H1 (cell line): ENCODE measurements at regions of chr17 and their contacts with region 1.

Region 1: GRCh38 chr17:16521070-16521727 is 29.2 kb upstream of the LRRC75A start:
- DNase-seq: peak; percentile 39 to 69
- H3K4me3 ChIP-seq: no peak overlapping the region
- H3K27ac ChIP-seq: no peak overlapping the region
- H3K4me1 ChIP-seq: peaks cover 0 to 3% (median 0%) of the 10 kb centered on the region in 4 experiments; a peak in 3 of 7 replicates
- H3K27me3 ChIP-seq: peaks cover 0 to 2% (median 0%) of the 10 kb centered on the region in 4 experiments; a peak in 2 of 7 replicates
- CTCF ChIP-seq: peak; percentile 78 to 97 (median 93)
- EP300 ChIP-seq: no peak
- POLR2A ChIP-seq: no peak
- RAD21 ChIP-seq: peak; percentile 97

Region 2: GRCh38 chr17:16456742-16457316 is 64.4 kb before region 1 on chr17:
- CTCF ChIA-PET with region 1: interaction called, 941 read pairs
- POLR2A ChIA-PET with region 1: interaction called, 11 read pairs
- DNase-seq: no peak
- H3K4me3 ChIP-seq: no peak overlapping the region
- H3K27ac ChIP-seq: no peak overlapping the region
- H3K4me1 ChIP-seq: peaks cover 6 to 16% (median 12%) of the 10 kb centered on the region in 4 experiments
- H3K27me3 ChIP-seq: no peaks in the 10 kb centered on the region
- CTCF ChIP-seq: peak; percentile 37 to 42 (median 37)
- EP300 ChIP-seq: no peak
- POLR2A ChIP-seq: no peak
- RAD21 ChIP-seq: peak; percentile 53 to 65

Region 3: GRCh38 chr17:16477255-16477654 is 43.9 kb before region 1 on chr17:
- CTCF ChIA-PET with region 1: interaction called, 941 read pairs
- POLR2A ChIA-PET with region 1: no interaction called
- DNase-seq: no peak
- H3K4me3 ChIP-seq: no peak overlapping the region
- H3K27ac ChIP-seq: no peak overlapping the region
- H3K4me1 ChIP-seq: peaks cover 0 to 33% (median 9%) of the 10 kb centered on the region in 4 experiments; a peak in 5 of 7 replicates
- H3K27me3 ChIP-seq: no peaks in the 10 kb centered on the region
- CTCF ChIP-seq: no peak
- EP300 ChIP-seq: no peak
- POLR2A ChIP-seq: no peak
- RAD21 ChIP-seq: no peak

Region 4: DNA sequence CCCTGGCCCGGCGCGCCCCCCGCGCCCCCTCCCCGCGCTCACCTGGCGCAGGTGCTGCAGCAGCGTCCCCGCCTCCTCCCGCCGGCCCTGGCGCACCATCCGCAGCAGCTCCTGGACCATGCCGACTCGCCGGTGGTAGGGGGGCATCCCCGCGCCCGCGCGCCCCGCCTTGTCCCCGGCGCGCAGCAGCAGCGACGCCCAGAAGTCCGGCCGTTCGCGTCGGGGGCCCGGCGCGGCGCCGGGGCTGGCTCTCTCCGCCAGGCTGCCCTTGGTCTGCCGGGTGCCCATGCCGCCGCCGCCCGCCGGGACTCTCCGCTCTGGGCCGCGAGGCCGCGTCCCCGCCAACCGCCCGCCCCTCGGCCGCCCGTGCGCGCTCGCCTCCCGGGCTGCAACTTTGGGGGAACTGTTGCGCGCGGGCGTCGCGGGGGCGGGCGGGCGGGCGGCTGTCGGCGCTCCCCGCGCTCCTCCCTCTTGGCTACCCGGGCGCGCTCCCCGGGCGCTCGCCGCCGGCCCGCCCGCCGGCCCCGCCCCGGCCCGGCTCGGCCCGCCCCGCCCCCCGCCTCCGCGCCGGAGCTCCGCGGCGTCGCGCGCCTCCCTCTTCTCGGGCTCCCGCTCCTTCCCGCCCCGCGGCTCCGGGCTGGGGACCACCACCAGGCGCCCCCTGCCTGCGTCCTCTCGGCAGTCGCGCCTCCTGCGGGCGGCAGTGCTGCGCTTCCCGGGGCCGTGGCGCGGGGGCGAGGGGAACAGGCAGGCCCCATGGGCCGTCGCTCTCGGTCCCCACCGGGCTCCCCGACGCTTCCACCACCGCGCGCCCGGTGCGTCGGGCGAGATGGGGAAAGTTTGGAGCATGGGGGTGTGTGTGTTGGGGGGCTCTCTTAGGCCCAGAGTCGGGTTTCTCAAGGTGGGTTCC is 29.2 kb before region 1 on chr17 and contains the start of gene LRRC75A:
- CTCF ChIA-PET with region 1: interaction called, 41 read pairs
- POLR2A ChIA-PET with region 1: interaction called, 4 read pairs
- DNase-seq: peak in 1 of 2 experiments; percentile 74
- H3K4me3 ChIP-seq: peak within 1 kb of the TSS; percentile 46 to 71 (median 58)
- H3K27ac ChIP-seq: no peak within 1 kb of the TSS
- H3K4me1 ChIP-seq: peaks cover 11 to 37% (median 27%) of the 10 kb centered on the region in 4 experiments
- H3K27me3 ChIP-seq: peaks cover 0 to 23% (median 13%) of the 10 kb centered on the region in 4 experiments; a peak in 2 of 7 replicates
- CTCF ChIP-seq: peak in 2 of 3 experiments; percentile 32 to 53; a peak in 3 of 4 replicates
- EP300 ChIP-seq: no peak
- POLR2A ChIP-seq: no peak
- RAD21 ChIP-seq: peak in 1 of 2 experiments; percentile 34; a peak in 2 of 4 replicates
- total RNA-seq, gene LRRC75A: 7.2 and 9.9 TPM in 2 replicates

Region 5: DNA sequence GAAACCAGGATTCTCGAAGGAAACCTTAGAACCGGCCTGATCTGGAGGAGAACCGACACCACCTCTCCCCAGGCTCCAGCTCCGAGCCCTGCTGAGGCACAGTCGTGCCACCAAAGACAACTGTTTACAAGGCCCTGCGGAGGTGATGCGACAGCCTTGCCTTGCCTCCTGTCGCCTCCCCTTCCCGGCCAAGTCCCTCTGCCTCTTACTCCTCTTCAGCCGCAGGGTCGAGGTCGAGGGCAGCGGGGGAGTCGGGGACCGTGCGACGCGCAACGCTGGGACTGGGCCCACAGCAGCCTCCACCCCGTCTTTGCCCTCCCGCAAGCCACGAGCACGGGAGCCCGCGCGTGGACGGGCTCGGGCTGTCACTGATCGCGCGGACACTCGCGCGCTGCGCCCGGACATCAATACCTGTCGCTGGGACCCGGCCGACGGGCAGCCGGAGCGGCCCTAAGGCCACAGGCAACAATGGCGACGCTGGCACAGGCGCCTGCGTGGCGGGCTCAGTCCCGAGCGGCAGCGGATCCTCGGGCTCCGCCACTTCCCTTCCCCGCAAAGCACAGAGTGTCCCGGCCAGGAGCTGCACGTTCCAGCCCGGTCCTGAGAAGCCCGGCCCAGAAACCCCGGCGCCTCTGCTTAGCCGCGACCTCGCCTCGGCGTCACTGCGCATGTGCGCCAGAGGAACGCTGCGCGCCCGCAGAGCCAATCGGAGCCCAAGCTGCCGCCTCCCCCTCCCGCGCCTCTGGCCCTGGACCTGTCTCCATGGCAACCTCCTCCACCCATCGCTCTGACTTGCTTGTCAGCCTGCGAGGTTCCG is 47.5 kb after region 1 on chr17 and contains the start of gene ZNF287:
- CTCF ChIA-PET with region 1: no interaction called
- POLR2A ChIA-PET with region 1: no interaction called
- DNase-seq: peak; percentile 53 to 93
- H3K4me3 ChIP-seq: peak within 1 kb of the TSS; percentile 58 to 79 (median 65)
- H3K27ac ChIP-seq: no peak within 1 kb of the TSS
- H3K4me1 ChIP-seq: peaks cover 0 to 3% (median 1%) of the 10 kb centered on the region in 4 experiments; a peak in 4 of 7 replicates
- H3K27me3 ChIP-seq: peaks cover 2 to 22% (median 18%) of the 10 kb centered on the region in 4 experiments
- CTCF ChIP-seq: no peak
- EP300 ChIP-seq: no peak
- POLR2A ChIP-seq: peak in 1 of 2 experiments; percentile 46; a peak in 1 of 3 replicates
- RAD21 ChIP-seq: no peak
- total RNA-seq, gene ZNF287: 5.6 and 6.2 TPM in 2 replicates